MCF 10A (cell line): ENCODE measurements at regions of chr4 and their contacts with region 1.

Region 1: GRCh38 chr4:127598656-127599055 is 34.1 kb upstream of the INTU start:
- DNase-seq: no peak
- H3K4me3 Mint-ChIP-seq: no peak overlapping the region
- H3K27ac Mint-ChIP-seq: no peak overlapping the region
- H3K4me1 Mint-ChIP-seq: no peaks in the 10 kb centered on the region
- H3K27me3 Mint-ChIP-seq: no peaks in the 10 kb centered on the region
- CTCF ChIP-seq: no peak

Region 2: DNA sequence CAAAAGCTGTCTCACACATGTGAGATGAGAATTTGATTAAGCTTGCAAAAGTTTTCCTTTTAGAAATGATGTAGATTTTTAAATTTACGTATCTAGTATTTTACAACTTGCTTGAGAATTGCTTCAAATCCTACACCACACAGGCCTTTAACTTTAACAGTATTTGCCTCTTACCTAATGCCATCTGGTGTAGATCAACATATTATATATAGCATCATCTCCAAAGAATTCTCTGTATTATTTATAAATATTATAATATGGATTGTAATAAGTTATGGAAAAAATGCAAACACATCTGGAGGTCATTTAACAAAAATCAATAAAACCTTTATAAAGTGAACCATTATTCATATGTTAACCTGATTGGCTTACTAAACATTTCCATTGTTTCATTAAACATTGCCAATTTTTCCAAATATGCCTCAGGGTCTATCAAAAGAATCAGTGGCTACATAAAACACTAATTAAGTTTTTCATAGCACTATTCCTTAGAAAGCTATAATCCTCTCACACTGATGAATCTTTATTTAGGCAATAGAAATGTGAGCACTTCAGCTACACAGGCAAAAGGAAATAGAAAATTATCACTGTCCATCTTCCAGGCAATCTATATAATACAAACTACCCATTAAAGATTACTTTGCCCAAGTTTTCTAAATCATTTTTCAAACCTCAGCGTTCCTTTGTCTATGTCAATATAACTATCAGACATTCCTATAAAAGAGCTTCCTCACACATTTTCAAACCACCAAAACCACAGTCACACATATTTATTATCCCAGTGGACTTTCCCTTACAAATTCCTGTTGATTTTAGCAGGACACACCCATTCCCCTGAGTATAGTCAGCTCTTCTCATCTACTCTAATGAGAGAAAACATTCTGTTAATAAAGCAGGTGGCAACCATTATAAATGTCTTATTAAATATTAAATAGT is 49.4 kb before region 1 on chr4:
- CTCF ChIA-PET with region 1: no interaction called
- POLR2A ChIA-PET with region 1: no interaction called
- intact Hi-C with region 1: no loop called
- DNase-seq: no peak
- H3K4me3 Mint-ChIP-seq: no peak overlapping the region
- H3K27ac Mint-ChIP-seq: peak overlapping the region; percentile 9
- H3K4me1 Mint-ChIP-seq: peaks cover 6% of the 10 kb centered on the region
- H3K27me3 Mint-ChIP-seq: no peaks in the 10 kb centered on the region
- CTCF ChIP-seq: no peak

Region 3: DNA sequence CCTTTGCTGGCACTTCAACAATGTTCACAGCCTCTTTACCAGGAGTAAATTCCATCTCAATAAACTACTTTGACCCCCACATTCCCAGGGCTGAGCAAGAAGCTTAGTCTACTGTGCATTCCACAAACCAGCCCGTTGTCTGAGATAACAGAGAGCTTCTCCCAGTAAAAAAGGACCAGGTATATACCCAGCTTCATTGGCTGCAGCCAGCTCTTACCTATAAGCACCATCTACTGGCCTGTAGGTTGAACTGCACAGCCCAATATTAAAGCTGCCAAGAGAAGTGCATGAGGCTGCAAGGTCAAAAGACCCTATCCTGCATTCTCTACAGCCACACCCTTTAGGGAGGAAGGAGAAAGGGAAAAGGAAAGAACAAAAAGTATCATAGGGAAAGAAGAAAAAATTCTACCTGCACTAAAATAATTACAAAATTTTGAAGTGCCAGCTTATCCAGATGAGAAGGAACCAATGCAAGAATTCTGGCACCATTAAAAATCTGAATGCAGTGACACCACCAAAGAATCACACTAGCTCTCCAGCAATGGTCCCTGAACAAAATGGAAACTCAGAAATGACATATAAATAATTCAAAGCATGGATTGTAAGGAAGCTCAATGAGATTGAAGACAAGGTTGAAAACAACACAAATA is 11.6 kb before region 1 on chr4:
- CTCF ChIA-PET with region 1: interaction called, 29 read pairs
- POLR2A ChIA-PET with region 1: interaction called, 5 read pairs
- intact Hi-C with region 1: no loop called
- DNase-seq: peak; percentile 67
- H3K4me3 Mint-ChIP-seq: no peak overlapping the region
- H3K27ac Mint-ChIP-seq: no peak overlapping the region
- H3K4me1 Mint-ChIP-seq: no peaks in the 10 kb centered on the region
- H3K27me3 Mint-ChIP-seq: no peaks in the 10 kb centered on the region
- CTCF ChIP-seq: peak; percentile 74